Uterus (tissue), 4 donors: ENCODE measurements at regions of chr14 and their contacts with region 1.

Region 1: GRCh38 chr14:39181026-39181692 is 6.1 kb downstream of the PNN start:
- DNase-seq: no peak
- H3K4me3 ChIP-seq: no peak overlapping the region
- H3K27ac ChIP-seq: no peak overlapping the region
- H3K4me1 ChIP-seq: peaks cover 5 to 7% of the 10 kb centered on the region in 2 donors
- H3K27me3 ChIP-seq: no peaks in the 10 kb centered on the region
- CTCF ChIP-seq: no peak
- POLR2A ChIP-seq: no peak

Region 2: GRCh38 chr14:39138440-39138839 is 42.7 kb before region 1 on chr14:
- intact Hi-C with region 1: loop called (anchors 10 kb)
- DNase-seq: no peak
- H3K4me3 ChIP-seq: no peak overlapping the region
- H3K27ac ChIP-seq: no peak overlapping the region
- H3K4me1 ChIP-seq: no peaks in the 10 kb centered on the region
- H3K27me3 ChIP-seq: no peaks in the 10 kb centered on the region
- CTCF ChIP-seq: no peak
- POLR2A ChIP-seq: no peak